ENCODE measurements at regions of chr18 and their contacts with region 1.

Region 1: DNA sequence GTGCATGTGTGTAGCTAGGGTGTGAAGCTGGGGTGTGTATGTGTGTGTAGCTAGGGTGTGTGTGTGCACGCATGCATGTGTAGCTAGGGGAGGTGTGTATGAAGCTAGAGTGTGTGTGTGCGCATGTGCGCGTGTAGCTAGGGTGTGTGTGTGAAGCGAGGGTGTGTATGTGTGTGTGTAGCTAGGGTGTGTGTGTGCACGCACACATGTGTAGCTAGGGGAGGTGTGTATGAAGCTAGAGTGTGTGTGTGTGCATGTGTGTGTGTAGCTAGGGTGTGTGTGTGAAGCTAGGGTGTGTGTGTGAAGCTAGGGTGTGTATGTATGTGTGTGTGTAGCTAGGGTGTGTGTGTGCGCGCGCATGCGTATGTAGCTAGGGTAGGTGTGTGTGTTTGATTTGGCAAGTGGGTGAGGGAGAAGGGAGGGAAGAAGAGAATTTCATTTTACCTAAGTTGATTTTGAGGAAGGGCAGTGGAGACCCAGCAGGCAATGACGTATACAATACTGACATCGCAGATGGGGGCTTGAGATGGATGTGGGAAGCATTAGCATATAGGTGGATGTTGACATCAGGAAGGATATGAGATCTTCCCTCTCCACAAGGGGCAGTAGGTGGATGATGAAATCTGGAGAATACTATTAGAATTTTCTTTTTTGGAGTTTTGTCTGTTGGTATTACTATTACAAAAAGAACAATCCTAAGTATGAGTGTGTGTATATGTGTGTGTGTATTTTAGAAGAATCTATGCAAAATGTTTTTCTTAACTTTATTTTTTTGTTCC is 70.7 kb downstream of the PRELID3A start:
- DNase-seq: no peak
- CTCF ChIP-seq: no peak

Region 2: GRCh38 chr18:12460874-12461273 is 17.6 kb before region 1 on chr18:
- CTCF ChIA-PET with region 1: interaction called, 11 read pairs
- POLR2A ChIA-PET with region 1: no interaction called
- DNase-seq: no peak
- CTCF ChIP-seq: no peak